IMR-90 (cell line): ENCODE measurements at regions of chr1 and their contacts with region 1.

Region 1: DNA sequence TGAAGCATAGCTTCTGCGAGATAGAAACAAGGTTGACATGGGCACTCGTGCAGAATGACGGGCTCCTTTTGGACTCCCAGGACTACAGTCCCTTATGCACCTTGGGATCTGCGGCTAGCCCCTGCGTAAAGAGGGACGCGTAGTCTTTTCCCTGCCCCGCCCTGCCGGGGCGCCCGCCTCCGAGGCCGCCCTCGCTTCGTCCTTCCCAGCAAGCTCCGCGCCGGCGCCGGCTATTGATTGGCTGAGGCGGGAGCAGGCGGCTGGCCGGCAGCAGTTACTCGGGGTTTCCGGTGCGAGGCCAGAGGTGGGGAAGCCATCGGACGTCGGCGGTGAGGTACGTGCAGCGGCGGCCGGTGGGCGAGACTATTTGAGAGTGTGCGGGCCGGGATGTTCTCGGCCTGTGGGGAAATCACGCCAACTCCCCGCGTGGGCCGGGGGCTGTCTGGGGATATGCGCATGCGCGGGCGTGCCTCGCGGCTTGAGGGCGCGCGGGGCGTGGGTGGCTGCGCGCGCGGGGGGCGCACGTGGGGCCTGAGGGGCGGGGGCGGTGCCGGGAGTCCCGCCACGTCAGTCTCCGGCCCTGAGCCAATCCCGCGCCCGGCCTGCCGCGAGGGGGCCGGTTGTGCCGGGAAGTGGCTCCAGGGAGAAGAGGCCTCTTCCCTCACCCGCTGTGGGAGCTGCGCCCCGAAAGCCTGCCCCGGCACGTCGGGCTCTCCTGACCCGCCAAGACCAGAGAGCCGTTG is at the start of gene TXLNA:
- DNase-seq: peak; percentile 87
- ATAC-seq: peak; percentile 87
- H3K4me3 ChIP-seq: peak within 1 kb of the TSS; percentile 49
- H3K27ac ChIP-seq: peak within 1 kb of the TSS; percentile 91
- H3K4me1 ChIP-seq: peaks cover 21% of the 10 kb centered on the region
- H3K27me3 ChIP-seq: no peaks in the 10 kb centered on the region
- CTCF ChIP-seq: no peak
- POLR2A ChIP-seq: peak; percentile 93
- RAD21 ChIP-seq: no peak; the same call in 1 of the 2 replicates
- total RNA-seq, gene TXLNA: 102 and 104 TPM in 2 replicates

Region 2: GRCh38 chr1:32013386-32014198 is 166.0 kb before region 1 on chr1 and contains the start of gene KHDRBS1:
- CTCF ChIA-PET with region 1: no interaction called
- POLR2A ChIA-PET with region 1: no interaction called
- dilution Hi-C with region 1: no loop called
- in situ Hi-C with region 1: no loop called
- intact Hi-C with region 1: no loop called
- DNase-seq: peak; percentile 99
- ATAC-seq: peak; percentile 90
- H3K4me3 ChIP-seq: peak within 1 kb of the TSS; percentile 94
- H3K27ac ChIP-seq: peak within 1 kb of the TSS; percentile 93
- H3K4me1 ChIP-seq: 0 out of 2 replicates have a peak, but pooled peaks cover 3% of the 10 kb centered on the region
- H3K27me3 ChIP-seq: no peaks in the 10 kb centered on the region
- CTCF ChIP-seq: no peak
- POLR2A ChIP-seq: peak; percentile 94
- RAD21 ChIP-seq: no peak
- total RNA-seq, gene KHDRBS1: 33.7 and 39.7 TPM in 2 replicates

Region 3: DNA sequence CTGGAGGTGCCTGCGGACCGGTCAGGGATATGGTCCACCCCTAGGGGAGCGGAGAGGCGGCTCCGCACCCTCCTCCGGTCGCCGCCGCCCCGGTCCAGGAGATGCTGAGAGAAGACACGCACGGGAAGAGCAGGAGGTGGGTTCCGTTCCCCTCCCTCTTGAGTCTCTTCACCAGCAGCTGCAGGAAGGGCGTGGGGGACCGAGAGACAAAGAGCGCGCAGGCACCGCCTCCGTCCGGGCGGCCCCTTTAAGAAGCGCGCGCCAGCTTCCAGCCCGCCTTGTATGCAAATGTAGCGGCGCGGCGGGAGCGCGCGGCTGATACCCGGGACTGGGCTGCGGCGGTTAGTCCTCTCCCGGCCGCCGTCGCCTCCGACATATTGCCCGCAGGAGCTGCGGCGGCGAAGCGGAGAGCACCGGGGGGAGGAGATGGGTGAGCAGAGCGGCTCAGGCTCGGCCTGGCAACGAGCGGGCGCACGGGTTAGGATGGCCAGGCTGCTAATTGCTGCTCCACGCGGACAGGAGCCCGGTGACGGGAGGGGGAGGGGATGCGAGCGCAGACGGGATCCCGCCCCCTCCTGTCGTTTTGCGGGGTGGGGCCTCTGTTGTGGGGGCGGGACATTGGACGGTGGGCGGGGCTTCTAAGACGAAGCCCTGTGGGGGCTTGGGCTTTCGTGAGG is 106.9 kb before region 1 on chr1 and contains the start of gene TMEM39B:
- CTCF ChIA-PET with region 1: no interaction called
- POLR2A ChIA-PET with region 1: no interaction called
- dilution Hi-C with region 1: no loop called
- in situ Hi-C with region 1: no loop called
- intact Hi-C with region 1: loop called (anchors 2 kb)
- DNase-seq: peak; percentile 95
- ATAC-seq: peak; percentile 87
- H3K4me3 ChIP-seq: peak within 1 kb of the TSS; percentile 84
- H3K27ac ChIP-seq: peak within 1 kb of the TSS; percentile 95
- H3K4me1 ChIP-seq: peaks cover 10% of the 10 kb centered on the region
- H3K27me3 ChIP-seq: no peaks in the 10 kb centered on the region
- CTCF ChIP-seq: no peak
- POLR2A ChIP-seq: peak; percentile 52
- RAD21 ChIP-seq: no peak
- total RNA-seq, gene TMEM39B: 4.4 and 6.5 TPM in 2 replicates

Region 4: DNA sequence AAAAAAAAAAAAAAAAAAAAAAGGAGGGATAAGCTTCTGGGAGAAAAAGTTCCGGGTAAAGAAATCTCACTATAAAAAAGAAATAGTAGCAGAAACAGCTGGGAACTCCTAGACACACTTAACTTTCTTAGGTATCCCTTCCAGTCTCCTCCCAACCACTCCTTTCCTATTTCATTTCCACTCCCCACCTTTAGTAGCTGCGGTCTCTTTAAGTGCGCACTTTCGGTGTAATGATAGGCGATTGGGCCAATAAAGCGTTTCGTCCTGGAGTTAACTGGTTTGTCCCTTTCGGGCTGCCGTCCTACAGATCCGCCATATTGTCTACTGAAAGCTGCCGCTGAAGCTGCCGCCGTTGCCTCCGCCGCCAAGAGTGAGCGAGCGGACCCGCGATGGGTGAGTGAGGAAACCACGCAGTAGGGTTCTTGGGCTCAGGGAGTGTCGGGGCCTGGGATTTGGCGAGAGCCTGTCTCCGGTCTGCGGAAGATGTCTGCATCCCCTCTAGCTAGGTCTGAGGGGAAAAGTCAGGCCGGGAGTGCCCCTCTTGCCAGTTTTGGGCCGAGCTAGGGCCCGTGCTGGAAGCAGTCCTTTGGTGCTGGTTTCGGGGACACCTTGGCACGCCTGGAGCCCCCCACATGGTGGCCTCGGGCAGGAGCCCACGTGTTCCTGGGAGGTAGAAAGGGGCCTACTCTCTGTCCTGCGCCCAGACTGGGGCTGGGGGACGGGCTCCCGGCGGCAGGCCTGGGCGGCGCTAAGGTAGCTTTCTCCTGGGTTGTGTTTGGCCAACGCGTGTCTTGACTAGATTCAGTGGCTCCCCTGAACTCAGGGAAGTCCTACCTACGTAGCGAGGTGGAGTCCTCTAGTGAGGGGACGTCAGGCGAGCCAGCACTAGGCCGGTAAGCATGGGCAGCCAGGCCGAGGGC is 71.6 kb before region 1 on chr1 and contains the start of gene KPNA6:
- CTCF ChIA-PET with region 1: no interaction called
- POLR2A ChIA-PET with region 1: interaction called, 4 read pairs
- dilution Hi-C with region 1: no loop called
- in situ Hi-C with region 1: no loop called
- intact Hi-C with region 1: loop called (anchors 2 kb)
- DNase-seq: peak; percentile 98
- ATAC-seq: peak; percentile 87
- H3K4me3 ChIP-seq: peak within 1 kb of the TSS; percentile 93
- H3K27ac ChIP-seq: peak within 1 kb of the TSS; percentile 95
- H3K4me1 ChIP-seq: no peaks in the 10 kb centered on the region
- H3K27me3 ChIP-seq: no peaks in the 10 kb centered on the region
- CTCF ChIP-seq: no peak
- POLR2A ChIP-seq: peak; percentile 64
- RAD21 ChIP-seq: no peak
- total RNA-seq, gene KPNA6: 50.7 and 53.6 TPM in 2 replicates

Region 5: GRCh38 chr1:32163405-32163804 is 16.2 kb before region 1 on chr1:
- CTCF ChIA-PET with region 1: no interaction called
- POLR2A ChIA-PET with region 1: interaction called, 30 read pairs
- dilution Hi-C with region 1: no loop called
- in situ Hi-C with region 1: no loop called
- intact Hi-C with region 1: no loop called
- DNase-seq: no peak
- ATAC-seq: no peak
- H3K4me3 ChIP-seq: no peak overlapping the region
- H3K27ac ChIP-seq: no peak overlapping the region
- H3K4me1 ChIP-seq: no peaks in the 10 kb centered on the region
- H3K27me3 ChIP-seq: no peaks in the 10 kb centered on the region
- CTCF ChIP-seq: no peak
- POLR2A ChIP-seq: no peak
- RAD21 ChIP-seq: no peak